HEK293T (cell line): ENCODE measurements at regions of chr19 and their contacts with region 1.

Region 1: GRCh38 chr19:42252365-42253244 is 2.3 kb downstream of the ERF start:
- DNase-seq: no peak

Region 2: DNA sequence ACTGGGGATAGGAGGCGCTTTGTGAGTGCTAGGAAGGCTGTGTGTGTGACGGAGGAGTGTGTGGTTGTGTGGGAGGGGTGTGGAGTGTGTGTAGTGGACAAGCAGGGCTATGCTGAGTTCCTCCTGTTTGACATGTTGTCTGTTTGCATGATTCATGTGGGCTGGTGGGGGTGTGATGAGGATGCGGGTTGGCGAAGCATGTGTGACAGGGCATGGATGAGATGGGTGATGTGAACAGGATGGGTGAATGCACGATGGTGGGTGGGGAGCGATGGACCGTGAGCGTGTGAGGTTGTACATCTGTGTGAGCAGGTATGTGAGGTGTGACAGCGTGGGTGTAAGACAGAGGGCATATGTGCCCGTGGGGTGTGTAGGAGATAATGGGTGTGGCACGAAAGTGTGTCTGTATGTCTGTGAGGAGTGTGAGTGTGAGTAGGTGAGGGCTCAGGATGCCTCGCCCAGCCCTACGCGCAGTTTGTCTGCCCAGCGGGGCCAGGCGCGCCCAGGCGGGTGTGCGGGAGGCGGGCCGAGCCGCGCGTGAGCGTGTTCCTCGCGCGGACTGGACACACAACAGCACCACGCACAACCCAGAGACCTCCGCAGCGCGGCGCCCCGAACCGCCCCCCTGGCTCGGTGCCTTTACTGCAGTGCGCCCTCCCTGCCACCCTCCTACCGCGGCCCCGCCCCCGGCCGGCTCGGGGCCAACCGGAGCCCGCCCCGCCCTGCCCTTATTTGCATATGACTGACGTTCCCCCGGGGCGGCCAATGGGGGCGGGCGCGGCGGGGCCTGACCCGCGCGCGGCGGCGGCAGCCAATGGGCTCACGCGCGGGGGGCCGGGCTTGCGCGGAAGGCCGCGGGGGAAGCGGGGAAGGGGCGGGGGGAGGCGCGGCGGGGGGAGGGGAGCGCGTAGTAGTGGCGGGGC is 30.8 kb after region 1 on chr19:
- CTCF ChIA-PET with region 1: interaction called, 53 read pairs
- POLR2A ChIA-PET with region 1: interaction called, 140 read pairs
- DNase-seq: peak; percentile 91

Region 3: DNA sequence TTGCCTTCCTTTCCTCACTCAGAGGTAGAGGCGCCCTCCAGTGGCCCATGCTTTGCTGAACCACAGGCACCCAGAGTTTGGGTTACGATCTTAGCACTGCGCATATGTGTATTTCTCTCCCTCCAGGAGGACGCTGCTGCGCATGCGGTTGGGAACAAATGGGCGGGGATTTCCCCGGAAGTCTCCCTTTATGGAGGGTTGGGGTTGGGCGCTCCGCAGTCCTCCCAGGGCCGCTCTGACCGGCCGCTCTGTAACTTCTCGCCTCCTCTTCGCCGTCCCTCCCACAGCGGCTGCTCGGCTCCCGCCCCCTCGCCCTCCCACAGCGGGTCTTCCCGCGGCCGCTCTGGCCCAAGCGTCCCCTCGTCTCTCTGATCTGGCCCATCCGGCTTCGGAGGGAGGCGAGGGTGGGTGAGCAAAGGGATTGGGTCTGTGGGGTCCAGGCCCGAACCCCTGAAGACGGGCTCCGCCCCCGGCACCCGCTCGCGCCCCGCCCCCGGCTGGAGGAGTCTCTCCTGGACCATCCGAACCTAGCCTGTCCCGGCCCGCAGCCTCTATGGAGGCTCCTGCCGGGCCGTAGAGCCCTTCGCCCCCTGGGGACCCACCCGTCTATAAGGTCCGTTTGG is 72.8 kb after region 1 on chr19 and contains the start of gene MEGF8:
- CTCF ChIA-PET with region 1: no interaction called
- POLR2A ChIA-PET with region 1: no interaction called
- DNase-seq: peak; percentile 98